ENCODE measurements at regions of chr12 and their contacts with region 1.

Region 1: DNA sequence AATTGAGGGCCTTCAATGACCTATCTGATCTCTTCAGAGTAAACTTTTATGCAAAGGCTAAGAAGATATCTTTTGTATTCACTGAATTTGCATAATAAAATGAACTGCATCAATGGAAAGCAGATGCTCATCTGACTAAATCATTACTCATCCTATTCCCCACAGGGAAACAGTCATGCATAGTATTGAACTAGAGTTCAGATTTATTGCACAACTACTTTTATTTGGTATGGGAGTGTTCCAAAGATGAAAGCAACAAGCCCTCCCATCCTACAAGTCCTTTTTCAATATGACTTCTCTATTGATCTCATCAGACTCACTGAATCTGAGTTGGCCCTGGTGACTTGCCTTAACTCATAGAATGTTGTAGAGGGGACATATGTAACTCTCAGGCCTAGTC is 159.8 kb downstream of the KITLG start:
- DNase-seq: no peak
- ATAC-seq: peak; percentile 76
- H3K4me3 Mint-ChIP-seq: no peak overlapping the region
- H3K27ac Mint-ChIP-seq: no peak overlapping the region
- H3K4me1 Mint-ChIP-seq: peaks cover 3% of the 10 kb centered on the region
- H3K27me3 Mint-ChIP-seq: no peaks in the 10 kb centered on the region

Region 2: GRCh38 chr12:88406905-88407304 is 13.6 kb before region 1 on chr12:
- CTCF ChIA-PET with region 1: no interaction called
- POLR2A ChIA-PET with region 1: no interaction called
- intact Hi-C with region 1: loop called in 1 of 2 experiments (anchors 1 kb)
- DNase-seq: no peak
- ATAC-seq: no peak
- H3K4me3 Mint-ChIP-seq: no peak overlapping the region
- H3K27ac Mint-ChIP-seq: no peak overlapping the region
- H3K4me1 Mint-ChIP-seq: no peaks in the 10 kb centered on the region
- H3K27me3 Mint-ChIP-seq: no peaks in the 10 kb centered on the region

Region 3: GRCh38 chr12:88580051-88580871 is 159.8 kb after region 1 on chr12 and contains the start of gene KITLG:
- CTCF ChIA-PET with region 1: no interaction called
- POLR2A ChIA-PET with region 1: no interaction called
- intact Hi-C with region 1: no loop called
- DNase-seq: peak; percentile 62
- ATAC-seq: peak; percentile 88
- H3K4me3 Mint-ChIP-seq: peak within 1 kb of the TSS; percentile 52
- H3K27ac Mint-ChIP-seq: no peak within 1 kb of the TSS
- H3K4me1 Mint-ChIP-seq: peaks cover 9% of the 10 kb centered on the region
- H3K27me3 Mint-ChIP-seq: peaks cover 43% of the 10 kb centered on the region
- total RNA-seq, gene KITLG: 0.14 to 0.23 TPM